ENCODE measurements at regions of chr19 and their contacts with region 1.

Region 1: GRCh38 chr19:29687244-29687896 is 22.1 kb downstream of the PLEKHF1 start:
- DNase-seq: no peak
- H3K4me3 Mint-ChIP-seq: no peak overlapping the region
- H3K27ac Mint-ChIP-seq: peak overlapping the region; percentile 74
- H3K4me1 Mint-ChIP-seq: peaks cover 46% of the 10 kb centered on the region
- H3K27me3 Mint-ChIP-seq: no peaks in the 10 kb centered on the region

Region 2: DNA sequence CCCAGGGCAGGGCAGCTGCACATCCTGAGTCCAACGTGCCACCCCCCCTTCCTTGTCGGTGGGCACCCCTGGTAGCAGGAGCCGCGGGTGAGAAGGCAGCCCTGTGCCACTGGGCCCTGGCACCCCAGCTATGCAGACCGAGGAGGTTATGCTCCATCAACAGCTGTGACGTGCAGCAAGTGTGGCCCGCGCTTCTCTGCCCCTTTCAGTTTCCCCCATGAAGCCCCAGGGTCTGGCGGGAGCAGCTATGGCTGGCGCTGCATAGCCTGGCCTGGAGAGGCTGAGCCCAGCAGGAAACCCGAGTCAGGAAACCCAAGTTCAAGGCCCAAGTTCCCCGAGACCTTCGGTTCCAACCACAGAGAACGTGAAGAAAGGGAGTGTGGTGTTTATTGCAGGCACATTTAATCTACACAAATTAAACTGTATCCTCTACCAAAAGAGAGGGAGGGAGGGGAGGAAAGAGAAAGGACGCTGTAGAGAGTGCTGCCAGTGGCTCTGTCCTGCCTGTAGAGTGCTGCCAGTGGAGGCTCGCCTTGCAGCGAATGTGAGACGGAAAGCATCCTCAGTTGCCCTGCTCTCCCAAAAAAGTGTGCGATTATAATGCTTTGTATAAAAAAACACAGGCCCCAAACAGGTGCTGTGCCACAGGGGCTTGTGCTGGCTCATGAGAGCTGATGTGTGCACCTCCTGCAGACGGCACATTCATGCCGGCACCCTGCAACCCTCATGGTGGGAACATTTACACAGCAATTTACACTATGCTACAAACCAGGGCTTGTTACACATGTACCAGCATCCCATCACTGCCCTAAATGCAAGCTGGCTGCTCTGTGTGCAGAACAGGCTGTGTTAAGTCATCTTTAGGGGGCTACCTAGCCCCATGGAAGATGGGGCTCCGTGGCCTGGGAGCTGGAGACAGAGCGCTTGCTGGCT is 65.0 kb before region 1 on chr19:
- intact Hi-C with region 1: loop called (anchors 2 kb)
- DNase-seq: no peak
- H3K4me3 Mint-ChIP-seq: no peak overlapping the region
- H3K27ac Mint-ChIP-seq: peak overlapping the region; percentile 38
- H3K4me1 Mint-ChIP-seq: peaks cover 46% of the 10 kb centered on the region
- H3K27me3 Mint-ChIP-seq: no peaks in the 10 kb centered on the region

Region 3: DNA sequence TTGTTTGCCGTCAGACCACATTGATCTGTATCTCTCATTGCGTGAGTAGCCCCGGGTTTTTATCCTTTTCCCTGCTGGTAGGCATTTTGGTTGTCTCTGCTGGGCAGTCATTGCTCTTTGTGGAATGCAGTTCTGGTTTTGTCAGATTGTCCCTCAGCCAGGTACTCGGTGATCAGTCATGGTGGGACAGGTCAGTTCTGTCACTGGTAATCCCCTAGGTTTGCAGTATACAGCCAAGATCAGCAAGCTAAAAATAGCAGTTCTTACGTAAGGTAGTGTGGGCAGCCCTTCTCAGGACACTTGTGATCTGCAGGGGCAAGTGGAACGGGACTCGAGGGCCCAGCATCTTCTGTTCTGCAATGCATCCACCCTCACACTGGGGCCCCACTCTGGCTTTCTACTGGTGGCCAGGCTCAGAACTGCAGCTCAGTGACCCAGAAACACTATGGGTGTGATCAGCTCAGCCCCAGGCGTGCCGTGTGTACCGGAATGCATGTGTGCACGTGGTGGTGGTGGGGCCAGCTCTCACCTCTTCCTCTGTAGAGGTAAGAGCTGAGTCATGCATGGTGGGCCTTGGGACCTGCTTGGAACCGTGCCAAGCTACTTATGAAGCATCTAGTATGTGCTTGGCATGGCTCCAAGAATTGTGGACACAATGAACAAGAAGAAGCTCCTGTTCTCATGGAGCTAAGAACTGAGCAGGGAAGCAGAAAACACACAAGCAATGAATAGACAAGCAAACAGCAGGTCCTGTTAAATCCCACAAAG is 15.8 kb before region 1 on chr19:
- intact Hi-C with region 1: loop called (anchors 1 kb)
- DNase-seq: peak; percentile 78
- H3K4me3 Mint-ChIP-seq: peak overlapping the region; percentile 67
- H3K27ac Mint-ChIP-seq: peak overlapping the region; percentile 87
- H3K4me1 Mint-ChIP-seq: peaks cover 67% of the 10 kb centered on the region
- H3K27me3 Mint-ChIP-seq: no peaks in the 10 kb centered on the region